ENCODE measurements at regions of chr2 and their contacts with region 1.

Region 1: DNA sequence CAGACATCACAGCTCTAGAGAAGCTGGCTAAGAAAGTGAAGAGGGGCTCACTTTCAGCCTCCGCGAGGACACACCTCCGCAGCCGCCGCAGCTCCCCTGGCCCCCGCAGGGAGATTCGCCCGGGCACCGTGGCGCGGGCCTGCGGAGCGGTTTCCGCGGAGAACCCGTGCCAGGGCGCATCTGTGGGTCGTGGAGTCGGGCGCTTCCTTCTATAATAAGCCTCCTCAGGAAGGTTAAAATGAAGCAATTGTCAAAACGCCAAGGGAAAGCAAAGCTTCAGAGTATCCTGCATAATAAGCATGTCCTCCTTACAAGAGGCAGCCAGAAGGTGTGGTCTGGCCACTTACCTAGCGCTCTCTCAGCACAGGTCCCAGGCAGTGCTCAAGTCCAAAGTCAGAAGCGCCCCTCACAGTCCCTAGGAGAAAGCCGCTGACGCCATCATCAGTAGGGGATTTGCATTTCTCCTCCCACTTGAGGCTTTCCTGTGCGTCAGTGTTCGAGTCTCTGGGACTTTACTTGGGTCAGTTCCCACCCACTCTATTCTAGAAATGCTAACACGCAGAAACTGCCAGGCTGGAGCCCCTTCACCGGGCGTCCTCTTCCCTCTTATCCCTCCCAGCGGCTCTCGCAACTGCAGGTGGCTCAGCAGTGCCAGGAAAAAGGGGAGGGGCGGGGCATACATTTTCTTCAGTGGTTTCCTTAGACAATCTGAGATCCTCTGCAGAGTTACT is at the start of gene STAT4:
- DNase-seq: peak; percentile 94
- H3K4me3 Mint-ChIP-seq: peak within 1 kb of the TSS; percentile 91
- H3K27ac Mint-ChIP-seq: peak within 1 kb of the TSS; percentile 97
- H3K4me1 Mint-ChIP-seq: peaks cover 57% of the 10 kb centered on the region
- H3K27me3 Mint-ChIP-seq: no peaks in the 10 kb centered on the region
- total RNA-seq, gene STAT4: 53.9 to 54.6 TPM

Region 2: DNA sequence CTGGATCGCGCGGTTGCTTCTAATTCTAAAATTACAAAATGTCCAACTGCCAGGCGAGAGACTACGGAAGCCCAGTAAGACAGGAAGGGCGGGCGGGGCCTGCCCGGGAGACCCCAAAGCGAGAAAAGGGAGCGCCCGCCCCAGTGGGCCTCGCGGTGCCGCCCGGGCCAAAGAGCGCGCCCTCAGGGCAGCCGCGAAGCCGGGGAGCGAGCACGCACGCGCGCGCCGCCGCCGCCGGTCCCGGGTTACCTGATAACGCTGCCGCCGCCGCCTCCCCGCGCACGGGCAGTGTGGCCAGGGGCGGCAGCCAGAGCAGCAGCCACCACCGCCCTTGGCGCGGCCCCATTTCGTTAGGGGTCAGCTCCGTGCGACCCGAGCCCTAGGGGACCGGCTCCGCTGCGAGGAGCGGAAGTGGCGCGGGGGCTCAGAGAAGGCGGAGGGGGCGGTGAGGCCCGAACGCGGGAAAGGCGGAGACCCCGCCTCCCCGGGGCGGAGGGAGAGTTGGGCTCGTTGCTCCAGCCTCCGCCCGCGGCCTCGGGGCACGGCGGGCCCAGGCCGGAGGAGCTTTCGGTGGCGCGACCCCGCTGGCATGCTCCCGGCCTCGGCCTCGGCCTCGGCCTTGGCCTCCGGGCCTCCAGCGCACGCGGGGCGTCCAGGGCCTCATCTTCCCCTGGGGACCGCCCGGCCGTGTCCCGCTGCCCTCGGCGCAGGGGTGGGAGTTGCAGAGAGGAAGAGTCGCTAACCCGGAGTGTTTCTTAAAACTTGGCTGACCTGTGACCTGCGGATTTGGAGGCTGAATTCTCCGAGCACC is 616.2 kb before region 1 on chr2 and contains the start of gene NEMP2:
- CTCF ChIA-PET with region 1: no interaction called
- intact Hi-C with region 1: loop called (anchors 10 kb)
- DNase-seq: peak; percentile 82
- H3K4me3 Mint-ChIP-seq: peak within 1 kb of the TSS; percentile 96
- H3K27ac Mint-ChIP-seq: peak within 1 kb of the TSS; percentile 100
- H3K4me1 Mint-ChIP-seq: peaks cover 51% of the 10 kb centered on the region
- H3K27me3 Mint-ChIP-seq: no peaks in the 10 kb centered on the region
- total RNA-seq, gene NEMP2: 32.9 to 34.2 TPM

Region 3: DNA sequence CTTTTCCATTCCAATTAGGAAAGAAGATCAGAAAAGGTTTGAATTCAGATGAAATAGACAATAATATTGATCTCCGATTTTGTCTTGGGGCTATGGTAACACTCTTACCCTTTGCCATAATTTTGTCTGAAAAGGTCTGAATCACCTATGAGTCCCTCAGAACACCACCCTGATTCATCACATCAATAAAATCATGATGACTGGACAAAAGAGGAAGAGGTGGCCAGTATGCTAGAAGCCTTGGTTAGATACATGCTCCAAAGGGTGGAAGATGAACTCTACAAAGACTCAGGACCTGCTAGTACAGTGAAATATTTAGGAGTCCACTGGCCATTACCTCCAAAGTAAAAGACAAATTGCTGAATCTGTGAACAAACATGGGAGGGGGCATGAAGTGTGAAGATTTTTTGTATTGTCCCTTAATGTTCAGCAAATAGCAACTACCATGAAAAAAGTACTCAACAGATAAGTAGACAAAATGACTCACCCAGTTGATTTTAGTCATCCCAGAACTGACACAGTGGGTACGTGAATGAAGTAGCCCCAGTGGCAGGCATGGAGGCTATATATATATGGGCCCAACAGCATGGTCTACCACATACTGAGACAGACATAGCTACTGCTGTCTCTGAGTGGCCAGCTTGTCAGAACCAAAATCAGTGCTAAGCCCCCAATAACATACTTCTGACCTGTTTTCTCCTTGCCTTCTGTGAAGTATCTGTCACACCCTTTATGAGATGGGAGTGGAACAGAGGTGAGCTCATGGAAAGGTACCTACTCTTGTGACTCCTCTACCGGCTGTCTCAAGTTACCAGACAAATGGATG is 306.7 kb before region 1 on chr2:
- CTCF ChIA-PET with region 1: no interaction called
- intact Hi-C with region 1: loop called (anchors 1 kb)
- DNase-seq: peak; percentile 76
- H3K4me3 Mint-ChIP-seq: peak overlapping the region; percentile 22
- H3K27ac Mint-ChIP-seq: peak overlapping the region; percentile 85
- H3K4me1 Mint-ChIP-seq: peaks cover 48% of the 10 kb centered on the region
- H3K27me3 Mint-ChIP-seq: no peaks in the 10 kb centered on the region

Region 4: GRCh38 chr2:191038241-191038725 is 112.5 kb before region 1 on chr2:
- CTCF ChIA-PET with region 1: interaction called, 25 read pairs
- intact Hi-C with region 1: no loop called
- DNase-seq: no peak
- H3K4me3 Mint-ChIP-seq: no peak overlapping the region
- H3K27ac Mint-ChIP-seq: peak overlapping the region; percentile 68
- H3K4me1 Mint-ChIP-seq: peaks cover 35% of the 10 kb centered on the region
- H3K27me3 Mint-ChIP-seq: no peaks in the 10 kb centered on the region

Region 5: GRCh38 chr2:191066197-191066918 is 84.4 kb before region 1 on chr2:
- CTCF ChIA-PET with region 1: interaction called, 19 read pairs
- intact Hi-C with region 1: no loop called
- DNase-seq: peak; percentile 41
- H3K4me3 Mint-ChIP-seq: peak overlapping the region; percentile 25
- H3K27ac Mint-ChIP-seq: peak overlapping the region; percentile 76
- H3K4me1 Mint-ChIP-seq: peaks cover 77% of the 10 kb centered on the region
- H3K27me3 Mint-ChIP-seq: no peaks in the 10 kb centered on the region

Region 6: GRCh38 chr2:191128172-191128910 is 22.4 kb before region 1 on chr2:
- CTCF ChIA-PET with region 1: interaction called, 6 read pairs
- intact Hi-C with region 1: loop called (anchors 1 kb)
- DNase-seq: peak; percentile 27
- H3K4me3 Mint-ChIP-seq: peak overlapping the region; percentile 32
- H3K27ac Mint-ChIP-seq: peak overlapping the region; percentile 63
- H3K4me1 Mint-ChIP-seq: peaks cover 65% of the 10 kb centered on the region
- H3K27me3 Mint-ChIP-seq: no peaks in the 10 kb centered on the region

Region 7: GRCh38 chr2:191189112-191189635 is 38.4 kb after region 1 on chr2:
- CTCF ChIA-PET with region 1: interaction called, 5 read pairs
- intact Hi-C with region 1: loop called (anchors 1 kb)
- DNase-seq: no peak
- H3K4me3 Mint-ChIP-seq: no peak overlapping the region
- H3K27ac Mint-ChIP-seq: peak overlapping the region; percentile 68
- H3K4me1 Mint-ChIP-seq: peaks cover 73% of the 10 kb centered on the region
- H3K27me3 Mint-ChIP-seq: no peaks in the 10 kb centered on the region